ENCODE measurements at regions of chr15 and their contacts with region 1.

Region 1: DNA sequence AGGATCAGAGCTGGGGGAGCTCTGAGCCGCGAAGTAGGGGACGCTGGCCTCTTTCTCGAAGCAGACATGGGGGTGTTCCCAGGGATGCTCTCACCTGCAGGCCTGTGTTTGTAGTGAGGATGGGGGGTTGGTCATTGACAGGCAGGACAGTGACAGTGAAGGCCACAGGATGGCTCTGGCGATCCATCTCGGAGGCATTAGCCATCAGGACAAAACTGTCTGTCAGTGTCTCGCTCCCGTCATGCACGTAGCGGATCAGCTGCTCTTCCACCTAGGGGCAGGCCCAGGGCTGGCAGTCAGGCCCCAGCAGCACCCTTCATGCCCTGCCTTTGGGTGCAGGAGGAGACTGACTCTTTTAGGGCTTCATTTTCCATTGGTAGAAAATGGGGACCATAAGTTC is 28.0 kb downstream of the CSPG4 start:
- DNase-seq: peak; percentile 37 to 51
- H3K4me3 ChIP-seq: no peak overlapping the region
- H3K4me3 Mint-ChIP-seq: no peak overlapping the region
- H3K27ac Mint-ChIP-seq: no peak overlapping the region
- H3K4me1 ChIP-seq: 0 out of 2 replicates have a peak, but pooled peaks cover 6% of the 10 kb centered on the region
- H3K4me1 Mint-ChIP-seq: peaks cover 7% of the 10 kb centered on the region
- H3K27me3 ChIP-seq: no peaks in the 10 kb centered on the region
- H3K27me3 Mint-ChIP-seq: no peaks in the 10 kb centered on the region
- CTCF ChIP-seq: no peak

Region 2: DNA sequence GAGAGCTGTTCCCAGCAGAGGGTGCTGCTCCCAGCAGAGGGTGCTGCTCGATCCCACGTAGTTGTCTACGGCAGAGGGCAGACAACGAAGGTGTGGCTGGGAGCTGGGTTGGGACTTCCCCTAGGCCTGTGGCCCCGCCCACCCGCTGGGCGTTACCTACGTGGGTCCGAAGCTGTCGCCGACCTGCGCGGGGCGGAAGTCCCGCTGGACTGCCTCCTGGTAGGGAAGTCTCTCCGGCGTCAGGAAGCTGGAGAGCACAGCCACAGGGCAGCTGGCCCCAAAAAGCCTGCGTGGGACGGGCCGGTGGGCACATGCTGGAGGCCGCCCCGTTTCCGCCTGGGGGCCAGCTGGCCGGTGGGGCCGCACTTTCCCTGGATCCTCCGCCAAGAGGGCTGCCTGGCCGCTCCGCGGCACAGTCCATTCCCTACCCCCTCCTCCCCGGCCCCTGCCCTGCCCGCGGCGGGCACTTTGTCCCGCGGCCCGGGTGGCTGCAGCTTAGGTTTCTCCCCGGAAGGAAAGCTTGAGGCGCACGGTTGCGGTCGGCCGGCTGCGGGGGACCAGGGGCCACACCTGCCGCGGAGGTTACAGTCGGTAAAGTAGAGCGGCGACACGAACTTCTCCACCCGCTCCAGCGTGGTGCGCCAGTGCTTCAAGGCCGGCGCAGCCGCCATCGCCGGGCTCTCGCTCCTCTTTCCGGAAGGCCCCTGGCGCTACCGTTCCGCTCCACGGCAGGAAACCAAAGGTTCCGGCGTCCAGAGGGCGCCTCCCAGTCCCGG is 316.5 kb before region 1 on chr15 and contains the start of gene MAN2C1:
- CTCF ChIA-PET with region 1: interaction called, 10 read pairs
- POLR2A ChIA-PET with region 1: no interaction called
- intact Hi-C with region 1: no loop called
- DNase-seq: peak; percentile 98
- H3K4me3 ChIP-seq: peak within 1 kb of the TSS; percentile 61
- H3K4me3 Mint-ChIP-seq: peak within 1 kb of the TSS; percentile 93
- H3K27ac Mint-ChIP-seq: peak within 1 kb of the TSS; percentile 93
- H3K4me1 ChIP-seq: peaks cover 19% of the 10 kb centered on the region
- H3K4me1 Mint-ChIP-seq: peaks cover 13% of the 10 kb centered on the region
- H3K27me3 ChIP-seq: no peaks in the 10 kb centered on the region
- H3K27me3 Mint-ChIP-seq: no peaks in the 10 kb centered on the region
- CTCF ChIP-seq: peak; percentile 53 to 92
- total RNA-seq, gene MAN2C1: 131 and 140 TPM in 2 replicates

Region 3: DNA sequence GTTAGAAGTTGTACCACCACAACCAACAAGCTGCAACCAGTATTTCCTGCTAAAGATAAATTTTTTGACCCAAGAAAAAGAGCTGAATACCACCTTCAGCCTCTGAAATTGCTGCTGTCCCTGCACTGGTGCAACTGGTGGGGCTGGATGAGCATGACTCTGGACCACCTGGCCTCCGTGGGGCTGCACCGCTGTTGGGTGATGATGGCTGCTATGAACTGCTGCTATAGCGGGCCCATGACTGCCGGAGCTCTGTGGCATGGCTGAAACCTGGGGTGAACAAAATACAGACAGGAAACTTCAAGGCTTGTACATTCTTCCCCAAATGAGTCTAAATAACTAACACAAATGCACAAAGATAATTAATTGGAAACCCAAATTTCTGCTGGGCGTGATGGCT is 262.1 kb before region 1 on chr15:
- CTCF ChIA-PET with region 1: no interaction called
- POLR2A ChIA-PET with region 1: no interaction called
- intact Hi-C with region 1: no loop called
- DNase-seq: no peak
- H3K4me3 ChIP-seq: no peak overlapping the region
- H3K4me3 Mint-ChIP-seq: no peak overlapping the region
- H3K27ac Mint-ChIP-seq: no peak overlapping the region
- H3K4me1 ChIP-seq: no peaks in the 10 kb centered on the region
- H3K4me1 Mint-ChIP-seq: no peaks in the 10 kb centered on the region
- H3K27me3 ChIP-seq: no peaks in the 10 kb centered on the region
- H3K27me3 Mint-ChIP-seq: no peaks in the 10 kb centered on the region
- CTCF ChIP-seq: no peak

Region 4: GRCh38 chr15:75508840-75509532 is 175.7 kb before region 1 on chr15:
- CTCF ChIA-PET with region 1: interaction called, 3 read pairs
- POLR2A ChIA-PET with region 1: no interaction called
- intact Hi-C with region 1: loop called (anchors 1 kb)
- DNase-seq: peak in 1 of 2 experiments; percentile 50
- H3K4me3 ChIP-seq: no peak overlapping the region
- H3K4me3 Mint-ChIP-seq: no peak overlapping the region
- H3K27ac Mint-ChIP-seq: no peak overlapping the region
- H3K4me1 ChIP-seq: no peaks in the 10 kb centered on the region
- H3K4me1 Mint-ChIP-seq: no peaks in the 10 kb centered on the region
- H3K27me3 ChIP-seq: no peaks in the 10 kb centered on the region
- H3K27me3 Mint-ChIP-seq: no peaks in the 10 kb centered on the region
- CTCF ChIP-seq: peak; percentile 51 to 73

Region 5: DNA sequence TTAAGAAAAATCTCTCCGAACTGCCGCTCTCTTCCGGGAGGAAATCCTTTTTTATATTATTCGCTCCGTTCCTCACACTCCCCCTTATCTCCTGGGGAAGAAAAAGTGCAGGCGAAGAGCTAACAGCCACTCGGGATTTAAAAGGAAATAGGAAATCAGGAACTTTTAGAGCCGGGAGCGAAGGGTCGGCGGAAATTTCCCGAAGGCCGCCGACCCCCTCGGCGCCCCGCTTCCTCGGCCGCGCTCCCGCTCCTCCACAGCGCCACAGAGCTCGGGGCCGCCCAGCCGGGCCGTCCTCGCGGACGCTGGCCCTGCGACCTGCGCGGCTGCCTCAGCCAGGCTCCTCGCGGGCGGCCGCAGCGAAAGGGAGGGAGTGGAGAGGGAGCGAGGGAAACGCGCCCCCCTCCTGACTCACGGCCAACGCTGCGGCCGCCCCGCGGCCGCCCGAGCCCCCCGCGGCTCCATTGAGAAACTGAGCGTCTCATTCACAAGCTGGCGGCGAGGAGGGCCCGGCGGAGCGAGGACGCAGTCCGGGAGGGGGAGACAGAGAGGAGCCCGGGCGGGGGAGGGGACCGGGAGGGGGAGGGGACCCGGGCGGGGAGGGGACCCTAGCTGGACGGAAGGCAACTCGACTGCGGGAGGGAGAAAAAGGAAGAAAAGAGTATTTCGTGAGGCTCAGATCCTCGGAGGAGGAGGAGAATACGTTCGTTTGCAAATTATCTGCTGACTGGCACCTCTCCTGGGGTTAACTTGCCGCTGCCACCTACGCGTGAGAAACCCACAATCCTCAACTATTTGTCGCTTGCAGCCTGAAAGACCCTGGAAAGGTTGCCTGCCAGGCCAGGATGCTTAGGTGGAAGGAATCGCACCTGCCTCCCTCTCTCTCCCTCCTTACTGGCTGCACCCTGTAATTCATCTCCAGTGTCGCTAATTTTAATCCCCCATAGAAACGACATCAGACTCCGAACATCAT is 105.4 kb before region 1 on chr15 and contains the start of gene PTPN9:
- CTCF ChIA-PET with region 1: no interaction called
- POLR2A ChIA-PET with region 1: no interaction called
- intact Hi-C with region 1: loop called (anchors 2 kb)
- DNase-seq: peak; percentile 77 to 82
- H3K4me3 ChIP-seq: peak within 1 kb of the TSS; percentile 70
- H3K4me3 Mint-ChIP-seq: peak within 1 kb of the TSS; percentile 87
- H3K27ac Mint-ChIP-seq: peak within 1 kb of the TSS; percentile 93
- H3K4me1 ChIP-seq: peaks cover 11% of the 10 kb centered on the region
- H3K4me1 Mint-ChIP-seq: peaks cover 5% of the 10 kb centered on the region
- H3K27me3 ChIP-seq: no peaks in the 10 kb centered on the region
- H3K27me3 Mint-ChIP-seq: no peaks in the 10 kb centered on the region
- CTCF ChIP-seq: peak; percentile 32 to 72
- total RNA-seq, gene PTPN9: 25.4 and 27.7 TPM in 2 replicates

Region 6: GRCh38 chr15:75639709-75640482 is 44.7 kb before region 1 on chr15 and contains the start of gene IMP3:
- CTCF ChIA-PET with region 1: interaction called, 8 read pairs
- POLR2A ChIA-PET with region 1: no interaction called
- intact Hi-C with region 1: loop called (anchors 1 kb)
- DNase-seq: peak; percentile 95
- H3K4me3 ChIP-seq: peak within 1 kb of the TSS; percentile 66
- H3K4me3 Mint-ChIP-seq: peak within 1 kb of the TSS; percentile 87
- H3K27ac Mint-ChIP-seq: peak within 1 kb of the TSS; percentile 92
- H3K4me1 ChIP-seq: peaks cover 4% of the 10 kb centered on the region; the same call in 1 of the 2 replicates
- H3K4me1 Mint-ChIP-seq: no peaks in the 10 kb centered on the region
- H3K27me3 ChIP-seq: no peaks in the 10 kb centered on the region
- H3K27me3 Mint-ChIP-seq: no peaks in the 10 kb centered on the region
- CTCF ChIP-seq: no peak
- total RNA-seq, gene IMP3: 58.4 and 60.4 TPM in 2 replicates

Region 7: GRCh38 chr15:75647370-75648155 is 37.1 kb before region 1 on chr15 and contains the start of gene SNX33:
- CTCF ChIA-PET with region 1: interaction called, 5 read pairs
- POLR2A ChIA-PET with region 1: no interaction called
- intact Hi-C with region 1: loop called (anchors 1 kb)
- DNase-seq: peak; percentile 88
- H3K4me3 ChIP-seq: peak within 1 kb of the TSS; percentile 66
- H3K4me3 Mint-ChIP-seq: peak within 1 kb of the TSS; percentile 75
- H3K27ac Mint-ChIP-seq: peak within 1 kb of the TSS; percentile 89
- H3K4me1 ChIP-seq: peaks cover 45% of the 10 kb centered on the region
- H3K4me1 Mint-ChIP-seq: peaks cover 24% of the 10 kb centered on the region
- H3K27me3 ChIP-seq: no peaks in the 10 kb centered on the region
- H3K27me3 Mint-ChIP-seq: no peaks in the 10 kb centered on the region
- CTCF ChIP-seq: peak in 1 of 2 experiments; percentile 51
- total RNA-seq, gene SNX33: 17.9 and 19.4 TPM in 2 replicates

Region 8: GRCh38 chr15:75712668-75713337 is 28.2 kb after region 1 on chr15 and contains the start of gene CSPG4:
- CTCF ChIA-PET with region 1: no interaction called
- POLR2A ChIA-PET with region 1: no interaction called
- intact Hi-C with region 1: no loop called
- DNase-seq: peak in 1 of 2 experiments; percentile 51
- H3K4me3 ChIP-seq: peak within 1 kb of the TSS; percentile 29
- H3K4me3 Mint-ChIP-seq: peak within 1 kb of the TSS; percentile 33
- H3K27ac Mint-ChIP-seq: no peak within 1 kb of the TSS
- H3K4me1 ChIP-seq: 0 out of 2 replicates have a peak, but pooled peaks cover 9% of the 10 kb centered on the region
- H3K4me1 Mint-ChIP-seq: no peaks in the 10 kb centered on the region
- H3K27me3 ChIP-seq: no peaks in the 10 kb centered on the region
- H3K27me3 Mint-ChIP-seq: no peaks in the 10 kb centered on the region
- CTCF ChIP-seq: no peak
- total RNA-seq, gene CSPG4: 0.12 and 0.20 TPM in 2 replicates

Region 9: DNA sequence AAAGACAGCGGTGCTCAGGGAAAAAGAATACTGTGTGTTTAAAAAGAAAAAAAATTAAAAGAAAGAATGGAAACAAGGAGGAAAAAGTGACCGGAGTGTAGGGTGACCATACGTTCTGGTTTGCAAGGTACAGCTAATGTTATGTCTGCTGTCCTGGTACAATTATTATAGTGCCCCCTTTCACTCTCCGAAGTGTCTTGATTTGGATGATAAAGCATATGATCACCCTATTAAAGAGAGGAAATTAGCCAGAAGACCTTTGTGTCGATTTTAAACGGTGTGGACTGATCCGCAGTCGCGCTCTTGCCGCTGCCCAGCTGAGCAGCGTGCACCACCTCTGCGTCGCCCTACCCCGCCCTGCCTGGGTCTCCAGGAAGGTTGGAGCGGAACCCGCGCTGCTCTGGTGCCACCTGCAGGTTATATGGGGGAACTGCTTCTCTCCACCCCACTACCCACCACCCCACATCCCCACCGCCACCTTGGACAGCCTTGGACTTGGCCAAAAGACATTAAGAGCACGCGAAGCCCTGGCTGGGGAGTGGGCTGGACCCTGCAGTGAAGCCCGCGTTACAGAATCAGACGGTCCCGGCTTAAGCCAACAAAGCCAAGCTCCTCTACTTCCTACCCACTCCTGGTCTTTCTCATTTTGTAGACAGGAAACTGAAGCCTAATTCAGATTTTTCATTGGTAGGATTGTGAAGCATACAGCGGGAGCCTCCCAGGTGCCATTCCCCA is 117.4 kb after region 1 on chr15:
- CTCF ChIA-PET with region 1: interaction called, 14 read pairs
- POLR2A ChIA-PET with region 1: no interaction called
- intact Hi-C with region 1: loop called (anchors 1 kb)
- DNase-seq: peak; percentile 73 to 90
- H3K4me3 ChIP-seq: peak overlapping the region; percentile 28
- H3K4me3 Mint-ChIP-seq: peak overlapping the region; percentile 69
- H3K27ac Mint-ChIP-seq: no peak overlapping the region
- H3K4me1 ChIP-seq: no peaks in the 10 kb centered on the region
- H3K4me1 Mint-ChIP-seq: peaks cover 8% of the 10 kb centered on the region
- H3K27me3 ChIP-seq: no peaks in the 10 kb centered on the region
- H3K27me3 Mint-ChIP-seq: peaks cover 16% of the 10 kb centered on the region
- CTCF ChIP-seq: peak; percentile 81 to 83

Measured in Caco-2 (cell line).